CD4-positive, alpha-beta T cell (primary cell): ENCODE measurements at regions of chrX and their contacts with region 1.

Region 1: GRCh38 chrX:21394792-21395191 is 20.6 kb downstream of the CNKSR2 start:
- DNase-seq: no peak
- ATAC-seq: no peak
- H3K4me3 ChIP-seq: no peak overlapping the region
- H3K4me3 Mint-ChIP-seq: no peak overlapping the region
- H3K27ac ChIP-seq: no peak overlapping the region
- H3K27ac Mint-ChIP-seq: no peak overlapping the region
- H3K4me1 ChIP-seq: no peaks in the 10 kb centered on the region
- H3K4me1 Mint-ChIP-seq: peaks cover 23% of the 10 kb centered on the region
- H3K27me3 ChIP-seq: no peaks in the 10 kb centered on the region
- H3K27me3 Mint-ChIP-seq: no peaks in the 10 kb centered on the region
- CTCF ChIP-seq: no peak

Region 2: DNA sequence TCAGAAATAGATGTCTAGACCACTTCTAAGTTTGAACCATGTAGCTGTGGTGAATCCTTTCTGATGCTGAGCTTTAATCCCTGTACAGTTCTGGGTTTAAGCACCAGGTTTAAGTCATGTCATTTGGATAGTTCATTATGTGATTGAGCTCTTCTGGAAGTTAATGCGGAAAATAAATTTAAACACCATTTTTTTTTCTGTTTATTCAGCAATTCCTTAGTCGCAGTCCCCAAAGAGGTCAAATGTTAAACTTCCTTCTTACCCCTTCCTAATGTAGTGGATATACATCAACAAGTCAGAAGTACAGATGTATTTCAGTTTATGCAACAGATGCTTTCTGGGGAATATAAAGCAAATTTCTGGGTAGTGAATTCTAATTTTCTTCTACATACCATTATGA is 32.3 kb after region 1 on chrX:
- CTCF ChIA-PET with region 1: no interaction called
- POLR2A ChIA-PET with region 1: no interaction called
- intact Hi-C with region 1: loop called in 1 of 2 experiments (anchors 5 kb)
- DNase-seq: no peak
- ATAC-seq: no peak
- H3K4me3 ChIP-seq: no peak overlapping the region
- H3K4me3 Mint-ChIP-seq: no peak overlapping the region
- H3K27ac ChIP-seq: no peak overlapping the region
- H3K27ac Mint-ChIP-seq: no peak overlapping the region
- H3K4me1 ChIP-seq: no peaks in the 10 kb centered on the region
- H3K4me1 Mint-ChIP-seq: peaks cover 14% of the 10 kb centered on the region
- H3K27me3 ChIP-seq: no peaks in the 10 kb centered on the region
- H3K27me3 Mint-ChIP-seq: no peaks in the 10 kb centered on the region
- CTCF ChIP-seq: no peak

Region 3: GRCh38 chrX:21438792-21439191 is 44.0 kb after region 1 on chrX:
- CTCF ChIA-PET with region 1: no interaction called
- POLR2A ChIA-PET with region 1: no interaction called
- intact Hi-C with region 1: no loop called
- DNase-seq: peak in 3 of 14 experiments; percentile 26 to 54 (median 35)
- ATAC-seq: peak; percentile 94
- H3K4me3 ChIP-seq: peak overlapping the region; percentile 24
- H3K4me3 Mint-ChIP-seq: peak overlapping the region; percentile 76
- H3K27ac ChIP-seq: peak overlapping the region in 1 of 2 donors; percentile 68
- H3K27ac Mint-ChIP-seq: peak overlapping the region; percentile 88
- H3K4me1 ChIP-seq: no peaks in the 10 kb centered on the region
- H3K4me1 Mint-ChIP-seq: peaks cover 32% of the 10 kb centered on the region
- H3K27me3 ChIP-seq: no peaks in the 10 kb centered on the region
- H3K27me3 Mint-ChIP-seq: no peaks in the 10 kb centered on the region
- CTCF ChIP-seq: no peak